Vagina (tissue), 2 donors: ENCODE measurements at regions of chr18 and their contacts with region 1.

Region 1: GRCh38 chr18:59308248-59308937 is 10.1 kb downstream of the CPLX4 start:
- DNase-seq: no peak
- H3K4me3 ChIP-seq: peak overlapping the region; percentile 11 to 33
- H3K27ac ChIP-seq: no peak overlapping the region
- H3K4me1 ChIP-seq: peaks cover 5% of the 10 kb centered on the region
- H3K27me3 ChIP-seq: no peaks in the 10 kb centered on the region
- CTCF ChIP-seq: peak; percentile 58 to 76 (median 60)
- POLR2A ChIP-seq: no peak

Region 2: GRCh38 chr18:59332986-59333385 is 24.6 kb after region 1 on chr18:
- intact Hi-C with region 1: no loop called
- DNase-seq: no peak
- H3K4me3 ChIP-seq: no peak overlapping the region
- H3K27ac ChIP-seq: no peak overlapping the region
- H3K4me1 ChIP-seq: no peaks in the 10 kb centered on the region
- H3K27me3 ChIP-seq: no peaks in the 10 kb centered on the region
- CTCF ChIP-seq: no peak
- POLR2A ChIP-seq: no peak

Region 3: DNA sequence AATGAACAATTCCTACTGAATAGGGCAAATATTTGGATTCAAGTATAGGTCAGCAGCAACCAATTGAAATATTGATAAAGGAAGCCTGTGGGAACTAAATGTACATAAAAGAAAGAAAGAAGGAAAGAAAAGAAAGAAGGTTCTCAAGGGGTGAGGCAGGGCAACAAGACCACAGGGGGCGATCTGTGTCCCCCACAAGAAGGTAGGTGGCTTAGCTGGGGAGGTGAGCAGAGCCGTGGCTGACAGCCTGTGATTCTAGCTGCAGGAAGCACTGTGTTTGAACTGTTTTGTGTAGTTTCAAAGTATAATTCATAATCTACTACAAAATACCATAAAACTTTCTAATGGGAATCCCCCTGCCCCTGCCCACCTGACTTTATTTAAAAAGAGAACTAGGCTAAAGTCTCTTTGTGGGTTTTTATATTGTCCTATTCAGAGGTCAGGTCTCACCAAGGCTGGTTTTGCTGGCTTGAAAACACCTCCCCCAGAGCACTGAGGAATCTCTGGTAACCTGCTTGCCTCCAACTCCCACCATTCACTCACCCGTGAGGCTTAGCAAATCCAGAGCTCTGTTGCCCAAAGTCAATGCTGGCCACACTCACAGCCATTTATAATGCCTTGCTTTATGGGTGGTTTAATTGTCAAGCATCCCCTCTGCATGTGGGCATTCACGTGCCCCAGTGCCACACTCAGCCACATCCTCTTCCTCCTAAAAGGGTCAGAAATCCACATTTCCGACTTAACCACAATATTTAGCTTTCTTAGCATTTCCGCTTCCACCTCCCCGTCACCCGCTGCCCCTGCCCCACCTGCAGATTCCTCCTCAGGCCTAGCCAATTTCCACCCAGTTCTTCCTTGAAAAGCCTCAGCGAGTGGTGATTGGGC is 87.1 kb after region 1 on chr18:
- intact Hi-C with region 1: loop called (anchors 10 kb)
- DNase-seq: no peak
- H3K4me3 ChIP-seq: no peak overlapping the region
- H3K27ac ChIP-seq: no peak overlapping the region
- H3K4me1 ChIP-seq: no peaks in the 10 kb centered on the region
- H3K27me3 ChIP-seq: no peaks in the 10 kb centered on the region
- CTCF ChIP-seq: no peak
- POLR2A ChIP-seq: no peak

Region 4: GRCh38 chr18:59672235-59672711 is 363.9 kb after region 1 on chr18:
- intact Hi-C with region 1: no loop called
- DNase-seq: no peak
- H3K4me3 ChIP-seq: no peak overlapping the region
- H3K27ac ChIP-seq: peak overlapping the region; percentile 29
- H3K4me1 ChIP-seq: peaks cover 17% of the 10 kb centered on the region
- H3K27me3 ChIP-seq: no peaks in the 10 kb centered on the region
- CTCF ChIP-seq: no peak
- POLR2A ChIP-seq: no peak